Endothelial cell of umbilical vein (primary cell): ENCODE measurements at regions of chr2 and their contacts with region 1.

Region 1: GRCh38 chr2:138501425-138502283 is at the start of gene SPOPL:
- DNase-seq: peak; percentile 90
- H3K4me3 ChIP-seq: peak within 1 kb of the TSS; percentile 93 to 97 (median 96)
- H3K27ac ChIP-seq: peak within 1 kb of the TSS; percentile 92
- H3K4me1 ChIP-seq: peaks cover 26% of the 10 kb centered on the region
- H3K27me3 ChIP-seq: no peaks in the 10 kb centered on the region
- CTCF ChIP-seq: no peak
- POLR2A ChIP-seq: peak; percentile 90
- total RNA-seq, gene SPOPL: 14.9 and 17.4 TPM in 2 replicates

Region 2: DNA sequence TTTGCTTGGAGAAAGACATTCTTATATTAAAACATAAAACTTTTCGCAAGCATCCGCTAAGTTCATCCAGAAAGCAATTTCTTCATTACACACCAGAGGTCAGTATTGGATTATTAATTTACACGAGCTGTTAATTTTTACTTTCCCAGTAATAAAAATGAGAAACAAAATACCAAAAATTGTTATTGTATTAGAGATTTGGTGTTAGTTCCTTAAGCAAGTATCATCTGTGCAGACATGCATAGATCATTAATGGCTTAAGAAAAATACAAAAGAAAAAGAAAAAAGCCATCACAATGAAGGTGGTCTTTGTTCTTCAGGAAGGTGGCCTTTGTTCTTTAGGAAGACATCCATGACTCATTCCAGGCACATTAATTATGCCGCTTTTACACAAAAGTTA is 591.0 kb before region 1 on chr2:
- CTCF ChIA-PET with region 1: no interaction called
- POLR2A ChIA-PET with region 1: no interaction called
- dilution Hi-C with region 1: no loop called
- intact Hi-C with region 1: loop called (anchors 2 kb)
- DNase-seq: peak; percentile 52
- H3K4me3 ChIP-seq: no peak overlapping the region
- H3K27ac ChIP-seq: no peak overlapping the region
- H3K4me1 ChIP-seq: peaks cover 4% of the 10 kb centered on the region
- H3K27me3 ChIP-seq: peaks cover 0 to 3% of the 10 kb centered on the region in 2 experiments
- CTCF ChIP-seq: peak; percentile 26
- POLR2A ChIP-seq: no peak

Region 3: GRCh38 chr2:137969418-137969765 is 532.3 kb before region 1 on chr2:
- CTCF ChIA-PET with region 1: no interaction called
- POLR2A ChIA-PET with region 1: no interaction called
- dilution Hi-C with region 1: no loop called
- intact Hi-C with region 1: loop called (anchors 2 kb)
- DNase-seq: peak; percentile 98
- H3K4me3 ChIP-seq: no peak overlapping the region
- H3K27ac ChIP-seq: peak overlapping the region; percentile 74
- H3K4me1 ChIP-seq: peaks cover 35% of the 10 kb centered on the region
- H3K27me3 ChIP-seq: no peaks in the 10 kb centered on the region
- CTCF ChIP-seq: no peak
- POLR2A ChIP-seq: no peak

Region 4: GRCh38 chr2:138415891-138416494 is 85.7 kb before region 1 on chr2:
- CTCF ChIA-PET with region 1: no interaction called
- POLR2A ChIA-PET with region 1: no interaction called
- dilution Hi-C with region 1: no loop called
- intact Hi-C with region 1: loop called (anchors 2 kb)
- DNase-seq: peak; percentile 28
- H3K4me3 ChIP-seq: no peak overlapping the region
- H3K27ac ChIP-seq: peak overlapping the region; percentile 23
- H3K4me1 ChIP-seq: peaks cover 12% of the 10 kb centered on the region
- H3K27me3 ChIP-seq: no peaks in the 10 kb centered on the region
- CTCF ChIP-seq: no peak
- POLR2A ChIP-seq: no peak

Region 5: GRCh38 chr2:138607746-138608145 is 106.1 kb after region 1 on chr2:
- CTCF ChIA-PET with region 1: no interaction called
- POLR2A ChIA-PET with region 1: interaction called, 4 read pairs
- dilution Hi-C with region 1: no loop called
- intact Hi-C with region 1: loop called (anchors 5 kb)
- DNase-seq: peak; percentile 71
- H3K4me3 ChIP-seq: no peak overlapping the region
- H3K27ac ChIP-seq: no peak overlapping the region
- H3K4me1 ChIP-seq: peaks cover 5% of the 10 kb centered on the region
- H3K27me3 ChIP-seq: no peaks in the 10 kb centered on the region
- CTCF ChIP-seq: no peak
- POLR2A ChIP-seq: no peak